ENCODE measurements at regions of chr4 and their contacts with region 1.

Region 1: GRCh38 chr4:140081641-140082390 is 72.2 kb downstream of the MAML3 start:
- DNase-seq: no peak
- ATAC-seq: no peak
- H3K4me3 ChIP-seq: no peak overlapping the region
- H3K4me3 Mint-ChIP-seq: no peak overlapping the region
- H3K27ac ChIP-seq: no peak overlapping the region
- H3K27ac Mint-ChIP-seq: no peak overlapping the region
- H3K4me1 ChIP-seq: peaks cover 2 to 5% of the 10 kb centered on the region in 2 experiments
- H3K4me1 Mint-ChIP-seq: peaks cover 8 to 21% (median 12%) of the 10 kb centered on the region in 3 donors
- H3K27me3 ChIP-seq: no peaks in the 10 kb centered on the region
- H3K27me3 Mint-ChIP-seq: no peaks in the 10 kb centered on the region

Region 2: GRCh38 chr4:140037357-140038030 is 44.3 kb before region 1 on chr4:
- CTCF ChIA-PET with region 1: no interaction called
- POLR2A ChIA-PET with region 1: interaction called in 1 of 2 experiments, 11 read pairs
- DNase-seq: no peak
- ATAC-seq: no peak
- H3K4me3 ChIP-seq: no peak overlapping the region
- H3K4me3 Mint-ChIP-seq: no peak overlapping the region
- H3K27ac ChIP-seq: no peak overlapping the region
- H3K27ac Mint-ChIP-seq: no peak overlapping the region
- H3K4me1 ChIP-seq: peaks cover 0 to 3% of the 10 kb centered on the region in 2 experiments
- H3K4me1 Mint-ChIP-seq: peaks cover 0 to 5% (median under 1%) of the 10 kb centered on the region in 3 donors
- H3K27me3 ChIP-seq: peaks cover 0 to 3% of the 10 kb centered on the region in 2 experiments
- H3K27me3 Mint-ChIP-seq: peaks cover 0 to 7% of the 10 kb centered on the region in 2 donors

Measured in T-cell (primary cell).